Posterior cingulate gyrus (tissue), 11 donors: ENCODE measurements at regions of chr17 and their contacts with region 1.

Region 1: DNA sequence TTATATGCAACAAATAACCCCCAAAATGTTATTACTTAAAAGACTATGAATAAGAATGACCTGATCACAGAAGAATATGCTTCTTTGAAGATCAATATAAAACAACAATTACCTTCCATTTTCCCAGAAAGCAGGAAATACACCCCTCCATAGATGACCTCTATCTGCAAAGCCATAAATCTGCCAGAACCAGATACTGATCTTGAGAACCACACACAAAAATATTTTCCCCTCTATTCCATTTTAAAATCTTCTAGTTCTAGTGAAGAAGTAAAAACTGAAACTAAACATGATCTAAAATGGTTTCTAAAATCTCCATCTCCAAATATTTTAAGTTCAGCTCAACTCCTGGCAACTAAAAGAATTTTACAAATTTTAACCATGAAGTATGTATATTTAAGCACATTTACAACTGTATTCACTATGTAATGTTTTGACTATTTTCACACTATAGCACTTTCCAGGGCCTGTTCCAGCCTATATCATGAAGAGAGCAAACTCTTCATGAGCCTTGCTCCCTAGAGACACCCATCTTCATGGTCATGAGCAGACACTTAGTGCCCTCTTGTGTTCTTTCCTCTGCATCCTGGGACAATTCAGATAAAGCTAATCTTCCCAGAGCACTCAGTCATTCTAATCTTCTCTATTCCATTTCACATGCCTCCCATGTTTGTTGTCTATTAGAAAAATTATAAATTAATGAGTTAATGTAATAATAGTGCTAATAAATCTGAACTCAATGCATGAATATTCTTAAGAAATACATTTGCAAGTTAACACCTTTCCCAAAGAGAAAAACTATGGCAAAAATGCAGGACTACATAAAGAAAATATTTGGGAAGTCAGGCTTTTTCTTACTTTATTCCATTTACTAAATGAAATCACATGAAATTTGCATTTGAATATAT is 87.0 kb downstream of the HELZ start:
- DNase-seq: no peak

Region 2: DNA sequence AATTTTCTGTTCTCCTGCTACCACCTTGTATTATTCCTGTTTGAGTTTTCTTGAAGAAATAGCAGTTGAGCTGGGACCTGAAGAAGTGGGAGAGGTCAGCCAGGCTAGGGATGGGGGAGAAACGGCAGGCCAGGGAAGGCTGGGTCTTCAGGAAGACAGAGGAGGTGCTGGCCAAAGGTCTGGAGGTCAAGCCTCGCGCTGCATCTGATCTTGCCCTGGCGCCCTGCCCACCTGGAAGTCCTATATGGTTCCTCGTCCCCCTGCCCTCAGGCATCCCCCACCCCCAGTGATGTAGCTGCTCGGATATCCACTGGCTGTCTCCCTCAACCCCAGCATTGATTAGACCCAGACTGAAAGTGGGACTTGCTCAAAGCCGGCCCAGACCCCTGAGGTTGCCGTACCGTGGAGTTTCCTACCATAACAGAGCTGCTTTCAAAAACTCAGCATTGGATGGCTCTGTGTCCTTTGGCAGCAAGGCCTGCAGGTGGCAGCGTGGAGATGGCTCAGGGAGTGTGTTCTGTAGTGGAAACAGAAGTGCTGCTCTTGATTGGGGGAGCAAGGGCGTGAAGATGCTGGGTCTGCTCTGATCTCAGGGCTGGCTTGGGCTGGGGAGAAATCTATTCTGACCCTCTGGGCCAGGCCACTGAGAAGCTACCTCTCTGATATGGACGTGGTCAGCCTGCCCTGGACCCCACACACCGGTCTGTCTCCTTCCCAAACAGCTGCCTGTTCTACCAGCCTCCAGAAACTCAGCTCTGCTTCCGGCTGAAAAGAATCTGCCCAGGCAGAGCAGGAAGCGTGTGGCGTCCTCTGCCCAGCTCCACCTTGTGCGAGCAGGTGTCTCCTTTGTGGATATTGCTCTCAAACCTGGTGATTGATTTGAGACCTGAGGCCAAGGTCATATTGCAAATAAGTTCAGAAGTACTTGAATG is 430.1 kb before region 1 on chr17:
- intact Hi-C with region 1: loop called (anchors 5 kb)
- DNase-seq: peak; percentile 56 to 97 (median 82)

Region 3: DNA sequence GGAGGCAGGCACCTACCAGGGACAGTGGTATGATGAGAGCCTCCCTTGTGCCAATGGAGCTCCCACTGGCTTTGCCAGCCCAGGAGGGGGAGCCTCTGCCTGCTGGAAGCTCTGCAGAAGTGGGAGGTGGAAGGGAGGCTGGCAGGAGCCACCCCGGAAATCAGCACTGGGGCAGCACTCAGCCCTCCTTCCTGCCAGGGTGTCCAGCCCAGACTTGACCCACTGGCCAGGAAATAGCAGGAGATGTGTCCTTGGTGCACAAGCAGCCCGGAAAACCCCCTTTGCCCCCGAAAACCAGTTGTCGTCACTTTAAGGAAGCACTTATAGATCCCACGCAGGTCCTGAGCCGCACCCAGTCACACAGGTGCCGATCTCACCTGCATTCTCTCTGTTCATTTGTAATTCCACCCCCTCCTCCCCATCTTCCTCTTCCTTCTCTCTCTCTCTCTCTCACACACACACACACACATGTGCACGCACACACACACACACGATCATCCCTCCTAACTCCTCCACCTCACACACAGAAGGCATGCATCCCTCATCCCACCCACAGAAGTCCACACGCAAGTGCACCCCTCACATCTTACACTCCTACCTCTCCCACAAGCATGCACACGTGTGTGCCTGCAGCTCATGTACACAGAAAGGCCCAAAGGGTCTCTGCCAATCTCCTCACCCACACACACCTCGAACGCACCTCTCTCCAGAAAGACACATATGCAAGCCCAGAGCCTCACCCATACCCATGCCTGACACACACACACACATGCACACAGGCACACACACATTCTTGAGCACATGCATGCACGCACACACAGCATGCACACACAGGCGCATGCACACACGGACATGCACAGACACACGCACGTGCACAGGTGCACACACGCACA is 242.5 kb before region 1 on chr17:
- intact Hi-C with region 1: loop called (anchors 5 kb)
- DNase-seq: no peak

Region 4: DNA sequence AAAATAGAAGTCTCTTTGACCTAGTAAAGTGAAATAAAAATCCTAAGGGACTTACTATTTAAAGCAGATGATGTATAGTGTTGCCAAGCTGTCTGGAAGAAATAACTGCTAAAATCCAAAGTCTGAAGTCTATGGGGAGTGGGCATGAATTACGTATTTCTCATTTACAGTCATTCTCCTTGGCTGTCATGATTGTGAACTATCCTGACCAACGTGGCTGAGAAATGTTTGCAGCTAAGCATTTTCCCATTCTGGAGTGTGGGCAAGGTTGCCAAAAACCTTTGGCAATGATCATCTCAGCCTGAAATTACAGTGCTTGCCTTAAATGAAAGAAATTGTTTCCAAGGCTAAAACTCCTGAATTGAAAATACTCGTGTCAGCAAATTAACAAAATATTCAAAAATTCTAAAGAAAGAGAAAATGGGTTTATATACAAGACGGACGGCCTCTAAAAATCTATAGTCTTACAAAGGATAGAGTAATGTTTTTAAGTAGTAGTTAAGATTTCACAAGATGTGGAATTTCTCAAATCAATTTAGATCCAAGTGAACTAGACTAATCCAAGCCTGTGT is 36.6 kb before region 1 on chr17:
- intact Hi-C with region 1: no loop called
- DNase-seq: no peak